Activated CD4-positive, alpha-beta memory T cell treated with anti-CD3 and anti-CD28 coated beads for 36 hours (primary cell): ENCODE measurements at regions of chr2 and their contacts with region 1.

Region 1: DNA sequence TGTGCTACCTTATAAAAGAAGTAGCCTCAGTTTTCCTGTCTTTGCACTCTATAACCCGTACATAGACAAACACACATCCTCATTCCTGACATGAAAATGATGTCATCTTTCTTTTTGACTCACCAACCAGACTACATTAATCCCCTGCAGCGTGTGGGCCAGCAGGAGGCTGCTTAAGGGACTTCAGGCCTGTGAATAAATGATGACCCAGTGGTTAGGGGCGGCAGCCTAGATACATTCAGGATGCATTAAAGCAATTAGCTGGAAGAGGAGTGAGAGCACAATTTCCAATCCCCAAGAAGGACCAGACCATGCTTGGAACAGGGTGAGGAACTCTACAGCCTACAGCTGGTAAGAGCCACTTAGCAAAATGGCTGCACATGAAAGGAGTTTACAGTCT is 57.3 kb upstream of the KLF7 start:
- DNase-seq: peak; percentile 56
- H3K4me3 Mint-ChIP-seq: no peak overlapping the region
- H3K27ac Mint-ChIP-seq: peak overlapping the region; percentile 24
- H3K4me1 Mint-ChIP-seq: peaks cover 46% of the 10 kb centered on the region
- H3K27me3 Mint-ChIP-seq: peaks cover 3% of the 10 kb centered on the region

Region 2: DNA sequence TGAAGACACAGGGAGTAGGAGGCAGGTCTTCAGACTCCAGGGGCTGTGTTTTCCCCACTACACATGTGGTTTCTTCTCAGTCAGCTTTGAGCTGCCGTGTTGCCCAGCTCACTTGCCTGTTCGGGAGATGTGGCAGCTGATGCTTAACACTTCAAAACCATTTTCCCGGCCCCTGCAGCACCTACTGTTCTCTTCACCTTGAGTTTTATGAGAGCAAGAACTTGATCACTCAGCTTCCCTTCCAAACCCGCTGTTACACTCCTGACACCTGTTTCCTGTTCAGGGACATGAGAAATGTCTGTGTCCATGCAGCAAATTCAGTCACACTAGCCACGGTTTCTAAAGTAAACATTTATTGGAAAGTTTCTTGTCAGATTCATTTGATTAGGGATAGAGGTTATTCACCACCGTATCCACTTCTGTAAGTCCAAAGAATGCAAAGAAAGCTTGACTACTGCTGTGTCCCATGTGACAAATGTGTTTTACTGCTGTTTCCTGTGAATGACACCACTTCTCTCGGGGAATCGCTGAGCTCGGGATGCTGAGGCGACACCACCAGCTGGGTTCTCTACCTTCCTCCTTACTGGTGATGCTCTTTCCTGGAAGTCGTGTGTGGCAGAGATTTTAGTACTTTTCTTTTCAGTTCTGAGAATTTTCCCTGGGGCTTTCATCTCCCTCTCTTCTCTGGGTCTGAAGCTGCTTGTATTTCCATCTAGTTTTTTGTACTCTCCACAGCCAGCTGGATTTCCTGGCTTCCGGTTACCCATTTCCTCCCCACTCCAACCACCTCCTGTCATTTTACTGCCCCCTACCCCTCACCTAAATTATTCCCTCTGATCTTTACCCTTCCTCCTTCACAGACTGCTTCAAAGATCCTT is 149.0 kb before region 1 on chr2:
- CTCF ChIA-PET with region 1: no interaction called
- POLR2A ChIA-PET with region 1: interaction called, 4 read pairs
- intact Hi-C with region 1: loop called (anchors 5 kb)
- DNase-seq: peak; percentile 69
- H3K4me3 Mint-ChIP-seq: peak overlapping the region; percentile 41
- H3K27ac Mint-ChIP-seq: peak overlapping the region; percentile 85
- H3K4me1 Mint-ChIP-seq: peaks cover 27% of the 10 kb centered on the region
- H3K27me3 Mint-ChIP-seq: peaks cover 2% of the 10 kb centered on the region

Region 3: GRCh38 chr2:207156451-207157161 is 66.4 kb before region 1 on chr2:
- CTCF ChIA-PET with region 1: no interaction called
- POLR2A ChIA-PET with region 1: no interaction called
- intact Hi-C with region 1: loop called (anchors 2 kb)
- DNase-seq: peak; percentile 66
- H3K4me3 Mint-ChIP-seq: no peak overlapping the region
- H3K27ac Mint-ChIP-seq: peak overlapping the region; percentile 46
- H3K4me1 Mint-ChIP-seq: peaks cover 89% of the 10 kb centered on the region
- H3K27me3 Mint-ChIP-seq: no peaks in the 10 kb centered on the region

Region 4: GRCh38 chr2:207173660-207174059 is 49.4 kb before region 1 on chr2:
- CTCF ChIA-PET with region 1: no interaction called
- POLR2A ChIA-PET with region 1: no interaction called
- intact Hi-C with region 1: no loop called
- DNase-seq: no peak
- H3K4me3 Mint-ChIP-seq: no peak overlapping the region
- H3K27ac Mint-ChIP-seq: no peak overlapping the region
- H3K4me1 Mint-ChIP-seq: peaks cover 5% of the 10 kb centered on the region
- H3K27me3 Mint-ChIP-seq: peaks cover 1% of the 10 kb centered on the region

Region 5: DNA sequence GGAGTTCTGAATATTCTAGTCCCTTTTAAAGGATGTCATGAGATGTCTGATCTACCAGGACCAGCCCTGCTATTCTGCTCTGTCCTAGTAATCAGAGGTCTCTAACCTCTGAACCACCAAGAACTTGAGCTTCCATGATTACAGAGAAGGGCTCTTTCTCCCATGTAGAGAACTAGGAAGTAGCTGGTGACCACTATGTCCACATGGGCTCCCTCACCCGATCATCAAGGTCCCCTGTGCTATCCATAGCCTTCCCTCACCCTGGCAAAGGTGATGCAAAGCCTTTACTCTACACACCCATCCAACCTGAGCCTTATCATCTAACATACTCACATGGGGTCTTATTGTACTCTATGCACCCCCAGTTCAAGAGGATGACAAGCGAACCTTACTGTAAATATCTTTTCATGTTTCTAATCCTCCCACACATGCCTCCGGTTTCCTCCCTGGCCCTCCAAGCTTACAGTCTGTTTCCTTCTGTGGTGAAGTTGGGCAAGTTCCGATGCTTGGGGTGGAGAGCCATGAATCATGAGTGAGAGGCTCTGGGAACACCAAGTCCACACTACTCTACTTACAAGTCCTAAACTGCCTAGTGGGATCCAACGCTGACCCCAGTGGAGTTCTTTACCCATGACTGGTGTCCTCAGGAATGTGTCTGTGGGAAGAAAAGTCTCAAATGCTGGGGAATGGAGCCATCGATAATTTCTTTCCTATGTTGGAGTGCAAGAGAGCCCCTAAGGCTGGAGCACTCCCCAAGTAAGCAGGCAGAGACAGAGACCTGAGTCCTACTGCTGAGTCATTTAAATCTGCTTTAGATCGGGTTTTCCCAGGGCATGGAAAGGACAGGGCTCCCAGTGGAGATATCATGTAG is 16.0 kb after region 1 on chr2:
- CTCF ChIA-PET with region 1: interaction called, 4 read pairs
- POLR2A ChIA-PET with region 1: interaction called, 16 read pairs
- intact Hi-C with region 1: loop called (anchors 1 kb)
- DNase-seq: peak; percentile 69
- H3K4me3 Mint-ChIP-seq: no peak overlapping the region
- H3K27ac Mint-ChIP-seq: no peak overlapping the region
- H3K4me1 Mint-ChIP-seq: peaks cover 25% of the 10 kb centered on the region
- H3K27me3 Mint-ChIP-seq: peaks cover 1% of the 10 kb centered on the region

Region 6: DNA sequence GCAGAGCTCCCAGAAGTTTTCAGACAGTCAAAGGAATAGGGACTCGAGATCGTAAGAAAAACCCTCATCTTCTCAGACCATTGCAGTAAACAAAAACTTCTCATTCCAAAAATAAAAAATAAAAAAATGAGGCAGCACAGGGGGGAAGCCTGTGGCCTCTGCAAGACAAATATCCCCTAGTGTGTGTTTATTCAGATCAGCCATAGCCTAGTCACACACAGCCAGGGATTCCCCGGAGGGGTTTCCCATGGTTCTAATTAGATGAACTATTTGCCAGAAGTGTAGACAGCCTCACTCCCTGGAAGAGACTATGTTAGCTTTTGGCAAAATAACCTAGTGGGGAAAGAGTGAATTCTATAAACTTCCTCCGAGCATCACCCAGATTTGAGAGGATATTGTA is 65.6 kb after region 1 on chr2:
- CTCF ChIA-PET with region 1: no interaction called
- POLR2A ChIA-PET with region 1: no interaction called
- intact Hi-C with region 1: loop called (anchors 2 kb)
- DNase-seq: peak; percentile 76
- H3K4me3 Mint-ChIP-seq: no peak overlapping the region
- H3K27ac Mint-ChIP-seq: peak overlapping the region; percentile 9
- H3K4me1 Mint-ChIP-seq: peaks cover 80% of the 10 kb centered on the region
- H3K27me3 Mint-ChIP-seq: peaks cover 4% of the 10 kb centered on the region

Region 7: DNA sequence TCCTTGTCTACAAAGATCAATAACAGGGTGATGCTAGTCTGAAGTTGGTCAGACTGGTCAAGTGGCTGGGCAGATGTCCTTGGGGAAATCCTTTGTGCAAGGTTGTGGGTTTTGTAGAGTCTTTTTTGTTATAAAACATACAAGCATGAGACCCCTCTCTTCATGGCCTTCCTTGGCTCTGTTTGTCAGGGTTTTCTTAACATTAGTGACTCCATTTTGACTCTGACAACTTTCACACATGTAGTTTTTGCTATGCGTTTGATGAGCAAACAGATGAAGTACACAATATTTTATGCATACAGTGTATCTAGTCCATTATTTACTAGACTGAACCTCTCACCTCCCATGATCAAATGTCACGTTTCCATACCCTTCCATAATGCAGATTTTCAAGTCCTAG is 93.9 kb after region 1 on chr2:
- CTCF ChIA-PET with region 1: no interaction called
- POLR2A ChIA-PET with region 1: no interaction called
- intact Hi-C with region 1: no loop called
- DNase-seq: no peak
- H3K4me3 Mint-ChIP-seq: no peak overlapping the region
- H3K27ac Mint-ChIP-seq: peak overlapping the region; percentile 74
- H3K4me1 Mint-ChIP-seq: peaks cover 36% of the 10 kb centered on the region
- H3K27me3 Mint-ChIP-seq: peaks cover 3% of the 10 kb centered on the region